Dorsolateral prefrontal cortex (tissue), 120 donors: ENCODE measurements at regions of chr17 and their contacts with region 1.

Region 1: GRCh38 chr17:76307299-76307965 is 644 bp downstream of the QRICH2 start:
- DNase-seq: no peak
- H3K4me3 ChIP-seq: no peak overlapping the region
- H3K27ac ChIP-seq: no peak overlapping the region
- H3K27me3 ChIP-seq: no peaks in the 10 kb centered on the region
- CTCF ChIP-seq: no peak

Region 2: DNA sequence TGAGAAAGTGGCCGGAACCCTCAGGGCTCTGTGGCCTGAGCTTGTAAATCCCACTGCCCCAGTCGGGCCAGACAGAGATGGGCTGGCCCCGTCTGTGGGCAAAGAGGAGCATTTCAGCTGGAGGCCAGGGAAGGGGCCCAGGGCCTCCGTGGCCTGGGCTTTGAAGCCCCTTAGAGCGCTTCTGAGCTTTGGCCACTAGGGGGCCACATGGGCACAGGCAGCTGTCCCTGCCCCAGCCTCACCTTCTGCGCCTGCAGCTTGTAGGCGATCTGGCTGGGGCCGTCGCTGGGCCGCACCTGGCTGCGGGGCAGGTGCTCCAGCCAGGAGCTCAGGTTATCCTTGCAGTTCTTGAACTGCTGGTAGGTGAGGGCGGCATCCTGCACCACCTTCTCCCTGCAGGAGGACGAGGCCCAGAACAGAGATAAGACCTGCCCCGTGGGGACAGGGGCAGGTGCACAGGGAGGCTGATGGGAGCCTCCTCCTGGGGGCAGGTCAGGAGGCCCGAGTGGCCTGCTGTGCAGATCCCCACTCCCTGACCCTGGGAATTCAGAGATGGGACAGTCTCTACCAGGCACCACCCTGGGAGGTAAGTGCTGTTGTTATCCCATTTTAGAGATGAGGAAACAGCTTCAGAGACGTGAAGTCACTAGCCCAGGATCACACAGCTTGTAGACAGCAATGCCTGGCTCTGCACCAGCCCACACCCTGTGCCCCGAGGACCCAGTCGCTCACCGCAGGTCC is 293.1 kb before region 1 on chr17:
- intact Hi-C with region 1: loop called in 1 of 2 experiments (anchors 5 kb)
- DNase-seq: peak; percentile 39 to 76 (median 62)
- H3K4me3 ChIP-seq: no peak overlapping the region
- H3K27ac ChIP-seq: peak overlapping the region in 1 of 59 donors; percentile 27
- H3K27me3 ChIP-seq: no peaks in the 10 kb centered on the region
- CTCF ChIP-seq: peak; percentile 77 to 96 (median 92)

Region 3: GRCh38 chr17:76397687-76398487 is 90.5 kb after region 1 on chr17:
- intact Hi-C with region 1: loop called (anchors 1 to 5 kb)
- DNase-seq: peak; percentile 87 to 97 (median 93)
- H3K4me3 ChIP-seq: no peak overlapping the region
- H3K27ac ChIP-seq: peak overlapping the region in 24 of 59 donors; percentile 3 to 71 (median 38)
- H3K27me3 ChIP-seq: no peaks in the 10 kb centered on the region
- CTCF ChIP-seq: peak; percentile 88 to 100 (median 99)

Region 4: GRCh38 chr17:76467366-76467765 is 159.9 kb after region 1 on chr17 and contains the start of gene AANAT:
- intact Hi-C with region 1: loop called in 1 of 2 experiments (anchors 5 kb)
- DNase-seq: no peak
- H3K4me3 ChIP-seq: no peak within 1 kb of the TSS
- H3K27ac ChIP-seq: peak within 1 kb of the TSS in 16 of 59 donors; percentile 6 to 72 (median 36)
- H3K27me3 ChIP-seq: no peaks in the 10 kb centered on the region
- CTCF ChIP-seq: no peak
- total RNA-seq, gene AANAT: 0.22 to 2.0 (median 0.62) TPM in 42 of 120 experiments, not detected in the others

Region 5: GRCh38 chr17:76506408-76507349 is 199.2 kb after region 1 on chr17:
- intact Hi-C with region 1: loop called (anchors 2 to 5 kb)
- DNase-seq: peak; percentile 74 to 92 (median 84)
- H3K4me3 ChIP-seq: peak overlapping the region in 1 of 59 donors; percentile 24
- H3K27ac ChIP-seq: no peak overlapping the region
- H3K27me3 ChIP-seq: peaks cover 0 to 3% (median 0%) of the 10 kb centered on the region in 45 donors
- CTCF ChIP-seq: peak; percentile 81 to 99 (median 98)